ENCODE measurements at regions of chr13 and their contacts with region 1.

Region 1: DNA sequence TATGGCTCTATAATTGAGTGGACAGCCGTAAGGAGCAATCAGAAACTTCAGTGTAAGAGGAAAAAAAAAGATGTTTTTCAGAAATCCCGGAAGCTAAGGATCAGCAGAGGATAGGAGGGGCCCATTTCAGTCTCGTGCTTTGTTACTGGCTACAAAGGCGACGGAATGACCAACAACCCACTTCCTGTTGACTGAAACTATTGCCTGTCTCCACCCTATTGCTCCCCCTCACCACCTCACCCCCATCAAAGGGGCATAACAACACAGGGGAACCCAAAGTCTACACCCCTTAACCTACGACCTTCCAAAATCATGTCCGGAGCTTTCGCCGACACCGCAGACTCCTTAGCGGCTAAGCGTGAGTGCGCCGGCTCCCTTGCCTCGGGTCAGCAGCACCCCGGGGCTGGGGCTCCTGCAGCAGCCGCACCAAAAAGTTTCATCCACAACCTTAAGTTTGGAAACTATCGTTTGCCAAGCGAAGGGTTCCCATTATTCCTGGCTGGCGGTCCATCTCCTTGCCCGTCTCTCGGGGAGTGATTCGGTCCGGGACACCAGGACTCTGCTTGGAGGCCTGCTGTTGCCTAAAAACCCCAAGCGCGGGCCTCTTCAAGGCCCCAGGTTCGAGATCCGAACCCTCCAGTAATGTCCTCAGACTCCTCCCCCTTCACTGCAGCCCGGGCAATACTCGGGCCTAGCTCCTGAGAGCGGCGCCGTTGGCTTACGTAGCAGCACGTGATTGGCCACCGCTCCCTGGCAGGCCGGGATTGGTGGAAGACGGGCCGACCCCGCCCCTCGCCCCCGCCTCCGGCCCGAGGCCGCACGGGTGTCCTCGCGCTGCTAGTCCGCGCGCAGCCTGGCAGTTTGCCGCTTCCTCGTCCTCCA is at the start of gene TPP2:
- DNase-seq: peak; percentile 95 to 99 (median 97)
- ATAC-seq: peak; percentile 91
- H3K4me3 ChIP-seq: peak within 1 kb of the TSS; percentile 97
- H3K4me3 Mint-ChIP-seq: peak within 1 kb of the TSS; percentile 90 to 99 (median 98)
- H3K27ac ChIP-seq: peak within 1 kb of the TSS; percentile 94
- H3K27ac Mint-ChIP-seq: peak within 1 kb of the TSS; percentile 99 to 100 (median 100)
- H3K4me1 ChIP-seq: peaks cover 34 to 45% of the 10 kb centered on the region in 2 donors
- H3K4me1 Mint-ChIP-seq: peaks cover 37 to 70% (median 65%) of the 10 kb centered on the region in 7 donors
- H3K27me3 ChIP-seq: no peaks in the 10 kb centered on the region
- H3K27me3 Mint-ChIP-seq: no peaks in the 10 kb centered on the region
- total RNA-seq, gene TPP2: 92.1 to 158 (median 119) TPM

Region 2: DNA sequence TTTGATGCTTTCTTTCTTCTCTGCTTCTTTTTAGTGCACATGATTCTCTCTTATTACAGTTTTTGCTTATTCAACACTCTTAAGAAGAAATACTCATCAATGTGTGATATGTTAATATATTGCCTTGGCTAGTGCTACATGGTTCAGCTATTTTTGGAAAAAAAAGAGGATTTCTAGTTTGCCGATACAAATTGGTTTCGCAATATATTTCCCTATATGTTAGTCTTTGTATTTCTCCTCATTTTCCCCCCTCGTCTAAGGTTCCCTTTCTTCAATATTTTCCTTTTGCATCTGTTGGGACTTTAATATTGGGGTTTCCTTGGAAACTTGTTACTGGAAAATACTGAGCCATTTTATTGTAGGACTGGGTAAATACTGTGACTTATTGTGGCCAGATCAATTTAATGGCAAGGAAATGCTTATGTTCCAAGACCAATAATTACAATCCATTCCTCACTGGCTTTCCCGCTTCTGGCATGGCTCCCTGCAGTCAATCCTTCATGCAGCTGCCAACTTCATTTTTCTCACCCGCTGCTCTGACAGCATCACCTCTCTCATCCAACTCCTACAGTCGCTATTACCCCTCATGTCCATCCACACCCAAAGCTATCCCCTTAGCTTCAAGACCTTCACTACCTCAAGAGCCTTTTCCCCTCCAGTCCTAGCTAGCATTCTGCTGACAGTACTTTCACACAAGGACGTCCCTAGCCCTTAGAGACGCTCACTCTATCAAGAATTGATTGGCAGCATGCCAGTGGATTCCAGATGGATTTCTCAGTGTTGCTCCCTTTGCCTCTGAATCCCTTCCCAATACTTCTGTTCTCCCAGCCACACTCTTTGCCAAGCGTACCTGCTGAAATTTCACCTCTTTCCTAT is 1641.7 kb before region 1 on chr13:
- CTCF ChIA-PET with region 1: no interaction called
- POLR2A ChIA-PET with region 1: no interaction called
- intact Hi-C with region 1: no loop called
- DNase-seq: no peak
- ATAC-seq: no peak
- H3K4me3 ChIP-seq: no peak overlapping the region
- H3K4me3 Mint-ChIP-seq: no peak overlapping the region
- H3K27ac ChIP-seq: no peak overlapping the region
- H3K27ac Mint-ChIP-seq: no peak overlapping the region
- H3K4me1 ChIP-seq: no peaks in the 10 kb centered on the region
- H3K4me1 Mint-ChIP-seq: no peaks in the 10 kb centered on the region
- H3K27me3 ChIP-seq: no peaks in the 10 kb centered on the region
- H3K27me3 Mint-ChIP-seq: peaks cover 0 to 26% (median 18%) of the 10 kb centered on the region in 5 donors

Region 3: GRCh38 chr13:102580552-102581169 is 15.7 kb before region 1 on chr13:
- CTCF ChIA-PET with region 1: interaction called, 23 read pairs
- POLR2A ChIA-PET with region 1: interaction called, 86 read pairs
- intact Hi-C with region 1: loop called (anchors 1 kb)
- DNase-seq: peak in 7 of 9 donors; percentile 37 to 70 (median 63)
- ATAC-seq: peak; percentile 85
- H3K4me3 ChIP-seq: no peak overlapping the region
- H3K4me3 Mint-ChIP-seq: no peak overlapping the region
- H3K27ac ChIP-seq: no peak overlapping the region
- H3K27ac Mint-ChIP-seq: peak overlapping the region in 1 of 9 donors; percentile 57
- H3K4me1 ChIP-seq: peaks cover 0 to 8% of the 10 kb centered on the region in 2 donors
- H3K4me1 Mint-ChIP-seq: peaks cover 8 to 14% (median 10%) of the 10 kb centered on the region in 7 donors
- H3K27me3 ChIP-seq: no peaks in the 10 kb centered on the region
- H3K27me3 Mint-ChIP-seq: peaks cover 4 to 26% (median 5%) of the 10 kb centered on the region in 5 donors

Region 4: GRCh38 chr13:102626928-102627327 is 30.5 kb after region 1 on chr13:
- CTCF ChIA-PET with region 1: interaction called, 3 read pairs
- POLR2A ChIA-PET with region 1: interaction called, 14 read pairs
- intact Hi-C with region 1: loop called in 1 of 2 experiments (anchors 1 kb)
- DNase-seq: no peak
- ATAC-seq: no peak
- H3K4me3 ChIP-seq: no peak overlapping the region
- H3K4me3 Mint-ChIP-seq: no peak overlapping the region
- H3K27ac ChIP-seq: no peak overlapping the region
- H3K27ac Mint-ChIP-seq: no peak overlapping the region
- H3K4me1 ChIP-seq: no peaks in the 10 kb centered on the region
- H3K4me1 Mint-ChIP-seq: peaks cover 0 to 4% (median 2%) of the 10 kb centered on the region in 7 donors
- H3K27me3 ChIP-seq: no peaks in the 10 kb centered on the region
- H3K27me3 Mint-ChIP-seq: no peaks in the 10 kb centered on the region

Region 5: GRCh38 chr13:102680842-102681740 is 84.7 kb after region 1 on chr13:
- CTCF ChIA-PET with region 1: no interaction called
- POLR2A ChIA-PET with region 1: interaction called, 5 read pairs
- intact Hi-C with region 1: loop called (anchors 2 to 5 kb)
- DNase-seq: peak in 5 of 9 donors; percentile 2 to 37 (median 34)
- ATAC-seq: peak; percentile 74
- H3K4me3 ChIP-seq: no peak overlapping the region
- H3K4me3 Mint-ChIP-seq: peak overlapping the region in 2 of 10 donors; percentile 5 to 57
- H3K27ac ChIP-seq: no peak overlapping the region
- H3K27ac Mint-ChIP-seq: peak overlapping the region; percentile 14 to 81 (median 58)
- H3K4me1 ChIP-seq: peaks cover 0 to under 1% of the 10 kb centered on the region in 2 donors
- H3K4me1 Mint-ChIP-seq: peaks cover 14 to 33% (median 21%) of the 10 kb centered on the region in 7 donors
- H3K27me3 ChIP-seq: no peaks in the 10 kb centered on the region
- H3K27me3 Mint-ChIP-seq: no peaks in the 10 kb centered on the region

Region 6: GRCh38 chr13:102779436-102780159 is 183.2 kb after region 1 on chr13:
- CTCF ChIA-PET with region 1: no interaction called
- POLR2A ChIA-PET with region 1: interaction called, 41 read pairs
- intact Hi-C with region 1: loop called in 1 of 2 experiments (anchors 1 kb)
- DNase-seq: peak in 4 of 9 donors; percentile 11 to 41 (median 17)
- ATAC-seq: peak; percentile 80
- H3K4me3 ChIP-seq: no peak overlapping the region
- H3K4me3 Mint-ChIP-seq: peak overlapping the region in 7 of 10 donors; percentile 3 to 78 (median 22)
- H3K27ac ChIP-seq: no peak overlapping the region
- H3K27ac Mint-ChIP-seq: peak overlapping the region; percentile 1 to 93 (median 51)
- H3K4me1 ChIP-seq: peaks cover 6 to 18% of the 10 kb centered on the region in 2 donors
- H3K4me1 Mint-ChIP-seq: peaks cover 12 to 42% (median 25%) of the 10 kb centered on the region in 7 donors
- H3K27me3 ChIP-seq: no peaks in the 10 kb centered on the region
- H3K27me3 Mint-ChIP-seq: no peaks in the 10 kb centered on the region

Region 7: DNA sequence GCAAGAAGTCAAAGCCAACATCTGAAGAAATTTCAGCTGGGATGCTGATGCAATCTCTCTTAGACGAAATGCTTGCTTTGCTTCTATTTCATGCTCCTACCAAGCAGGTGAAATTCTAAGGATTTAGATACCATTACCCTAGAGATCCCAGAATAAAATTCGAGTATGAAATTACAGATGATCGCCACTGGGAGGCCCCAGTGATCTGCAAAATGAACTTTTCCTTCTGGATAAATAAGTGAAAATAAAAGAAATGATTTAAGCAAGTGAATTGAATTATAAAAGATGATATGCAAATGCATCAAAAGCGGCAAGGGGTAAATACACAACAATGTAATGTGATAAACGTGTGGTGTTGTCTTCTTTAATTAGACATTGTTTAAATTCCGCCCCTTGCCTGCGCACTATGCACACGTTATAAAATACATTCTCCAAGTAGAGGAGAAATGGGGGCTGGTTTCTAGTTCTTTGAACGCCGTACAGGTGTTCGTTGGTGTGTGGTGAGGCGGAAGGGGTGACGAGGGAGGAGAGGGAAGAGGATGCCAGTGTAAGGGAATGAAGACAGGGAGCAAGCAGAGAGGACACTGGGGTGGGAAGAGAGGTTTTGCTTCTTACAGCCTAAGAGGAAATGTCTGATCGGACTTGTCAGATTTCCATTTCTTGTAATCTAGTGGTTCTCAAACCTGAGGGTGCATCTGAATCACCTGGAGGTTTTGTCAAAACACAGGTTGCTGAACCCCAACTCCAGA is 307.4 kb after region 1 on chr13:
- CTCF ChIA-PET with region 1: no interaction called
- POLR2A ChIA-PET with region 1: no interaction called
- intact Hi-C with region 1: no loop called
- DNase-seq: no peak
- ATAC-seq: no peak
- H3K4me3 ChIP-seq: no peak overlapping the region
- H3K4me3 Mint-ChIP-seq: no peak overlapping the region
- H3K27ac ChIP-seq: no peak overlapping the region
- H3K27ac Mint-ChIP-seq: no peak overlapping the region
- H3K4me1 ChIP-seq: no peaks in the 10 kb centered on the region
- H3K4me1 Mint-ChIP-seq: no peaks in the 10 kb centered on the region
- H3K27me3 ChIP-seq: no peaks in the 10 kb centered on the region
- H3K27me3 Mint-ChIP-seq: peaks cover 0 to 22% (median 7%) of the 10 kb centered on the region in 5 donors

Region 8: DNA sequence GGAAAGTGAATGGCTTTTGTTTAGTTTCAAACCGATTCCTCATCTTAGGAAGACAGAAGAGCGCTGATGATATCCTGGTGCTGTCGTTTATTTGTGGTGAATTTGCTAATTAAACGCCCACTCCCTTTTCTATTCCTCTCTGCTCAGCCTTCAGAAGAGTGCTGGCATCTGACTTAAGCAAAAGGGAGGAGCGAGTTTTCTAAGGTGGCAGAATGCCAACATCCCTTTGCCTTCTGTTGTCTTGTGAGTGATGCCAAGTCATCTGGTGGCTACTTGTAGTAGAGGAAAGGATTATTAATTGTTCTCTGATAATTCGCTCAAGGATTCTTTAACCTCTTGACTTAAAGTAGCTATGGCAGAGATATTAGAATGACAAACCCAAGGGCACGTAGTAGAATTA is 317.5 kb after region 1 on chr13:
- CTCF ChIA-PET with region 1: no interaction called
- POLR2A ChIA-PET with region 1: no interaction called
- intact Hi-C with region 1: no loop called
- DNase-seq: no peak
- ATAC-seq: no peak
- H3K4me3 ChIP-seq: no peak overlapping the region
- H3K4me3 Mint-ChIP-seq: no peak overlapping the region
- H3K27ac ChIP-seq: no peak overlapping the region
- H3K27ac Mint-ChIP-seq: no peak overlapping the region
- H3K4me1 ChIP-seq: no peaks in the 10 kb centered on the region
- H3K4me1 Mint-ChIP-seq: peaks cover 0 to 5% (median 0%) of the 10 kb centered on the region in 7 donors
- H3K27me3 ChIP-seq: no peaks in the 10 kb centered on the region
- H3K27me3 Mint-ChIP-seq: peaks cover 28 to 45% (median 36%) of the 10 kb centered on the region in 5 donors